Adrenal gland (tissue), 19 donors: ENCODE measurements at regions of chr13 and their contacts with region 1.

Region 1: DNA sequence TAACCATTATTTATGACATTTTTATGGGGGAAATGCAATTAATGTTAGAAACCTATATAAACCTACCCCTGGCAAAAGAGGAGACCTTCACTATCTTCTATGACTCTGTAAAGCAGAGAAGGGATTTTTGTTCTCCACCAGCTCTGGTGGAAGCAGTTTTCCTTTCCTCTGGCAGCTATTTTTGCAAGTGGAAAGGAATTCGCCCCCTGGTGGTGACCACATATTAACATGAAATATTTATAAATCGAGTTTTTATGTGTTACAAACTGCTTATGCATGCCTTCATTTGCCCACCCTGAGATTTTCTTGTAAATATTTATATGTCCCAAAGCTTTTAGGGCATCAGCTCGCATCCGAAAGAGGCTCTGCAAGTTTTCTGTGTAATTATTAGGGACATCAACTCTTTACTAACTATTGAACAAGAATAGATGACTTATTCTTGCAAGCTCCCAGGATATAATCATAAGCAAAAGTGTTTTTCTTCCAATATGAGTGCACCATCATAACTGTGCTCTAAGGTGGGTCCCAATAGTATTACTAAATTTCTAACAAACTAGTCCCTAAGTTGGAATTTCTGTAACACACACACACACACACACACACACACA is 62.4 kb downstream of the SERTM1 start:
- DNase-seq: peak; percentile 43 to 73 (median 57)
- H3K4me3 ChIP-seq: no peak overlapping the region
- H3K27ac ChIP-seq: no peak overlapping the region
- H3K4me1 ChIP-seq: no peaks in the 10 kb centered on the region
- H3K27me3 ChIP-seq: no peaks in the 10 kb centered on the region
- CTCF ChIP-seq: peak; percentile 64 to 83 (median 74)
- POLR2A ChIP-seq: no peak

Region 2: GRCh38 chr13:36282818-36283445 is 453.3 kb before region 1 on chr13:
- intact Hi-C with region 1: loop called in 1 of 2 experiments (anchors 10 kb)
- DNase-seq: no peak
- H3K4me3 ChIP-seq: no peak overlapping the region
- H3K27ac ChIP-seq: no peak overlapping the region
- H3K4me1 ChIP-seq: no peaks in the 10 kb centered on the region
- H3K27me3 ChIP-seq: no peaks in the 10 kb centered on the region
- CTCF ChIP-seq: peak; percentile 70 to 88 (median 85)
- POLR2A ChIP-seq: no peak

Region 3: GRCh38 chr13:36420437-36420891 is 315.8 kb before region 1 on chr13:
- intact Hi-C with region 1: loop called in 1 of 2 experiments (anchors 10 kb)
- DNase-seq: peak; percentile 66 to 91 (median 75)
- H3K4me3 ChIP-seq: no peak overlapping the region
- H3K27ac ChIP-seq: no peak overlapping the region
- H3K4me1 ChIP-seq: peaks cover 0 to 20% of the 10 kb centered on the region in 2 donors
- H3K27me3 ChIP-seq: no peaks in the 10 kb centered on the region
- CTCF ChIP-seq: peak; percentile 69 to 94 (median 78)
- POLR2A ChIP-seq: no peak

Region 4: DNA sequence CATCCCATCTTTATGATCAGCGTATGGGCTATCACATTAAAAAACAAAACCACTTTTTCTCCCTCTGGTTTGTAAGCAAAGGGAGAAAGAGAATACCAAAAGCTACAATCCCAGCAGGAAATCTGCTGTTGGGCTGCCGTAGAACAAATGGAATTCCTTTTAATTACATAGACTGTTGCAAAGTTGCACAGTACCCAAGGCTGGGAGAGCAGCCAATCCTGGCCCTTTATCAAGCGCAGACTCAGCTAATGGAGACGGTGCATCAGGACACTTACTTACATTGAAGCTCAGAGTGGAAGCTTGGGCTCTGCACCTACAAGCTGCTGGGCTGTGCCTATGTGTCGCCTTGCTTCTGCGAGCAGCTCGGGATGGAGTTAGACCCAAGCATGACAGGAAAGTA is 288.7 kb before region 1 on chr13:
- intact Hi-C with region 1: loop called in 1 of 2 experiments (anchors 10 kb)
- DNase-seq: no peak
- H3K4me3 ChIP-seq: no peak overlapping the region
- H3K27ac ChIP-seq: no peak overlapping the region
- H3K4me1 ChIP-seq: no peaks in the 10 kb centered on the region
- H3K27me3 ChIP-seq: no peaks in the 10 kb centered on the region
- CTCF ChIP-seq: no peak
- POLR2A ChIP-seq: no peak